Breast epithelium (tissue), 4 donors: ENCODE measurements at regions of chr22 and their contacts with region 1.

Region 1: DNA sequence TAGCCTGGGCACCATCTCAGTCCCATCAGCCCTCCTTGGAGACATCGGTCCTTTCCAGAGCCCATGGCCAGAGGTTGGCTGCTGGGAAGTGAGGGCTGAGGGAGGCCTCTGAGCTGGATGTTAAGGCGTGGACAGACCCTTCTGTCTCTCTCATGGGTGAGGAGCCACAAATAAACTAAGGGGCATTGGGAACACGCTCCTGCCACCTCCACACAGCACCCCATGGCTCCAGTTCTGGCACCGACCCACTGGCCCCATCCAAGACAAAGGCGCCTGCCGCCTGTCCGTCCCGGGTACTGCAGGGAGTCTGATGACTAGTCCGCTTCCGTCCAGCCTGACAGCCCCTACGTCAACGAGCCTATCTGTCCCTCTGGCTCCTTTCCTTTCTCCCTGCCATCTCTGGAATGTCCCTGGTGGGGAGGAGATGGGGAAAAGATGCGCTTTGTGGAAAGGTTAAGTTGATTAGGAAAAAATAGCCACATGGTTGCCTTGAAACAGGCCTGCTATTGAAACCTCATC is 10.5 kb downstream of the PDGFB start:
- DNase-seq: no peak
- H3K4me3 ChIP-seq: no peak overlapping the region
- H3K27ac ChIP-seq: peak overlapping the region; percentile 50 to 81
- H3K4me1 ChIP-seq: peaks cover 10 to 25% of the 10 kb centered on the region in 2 donors
- H3K27me3 ChIP-seq: no peaks in the 10 kb centered on the region
- CTCF ChIP-seq: no peak
- POLR2A ChIP-seq: no peak

Region 2: DNA sequence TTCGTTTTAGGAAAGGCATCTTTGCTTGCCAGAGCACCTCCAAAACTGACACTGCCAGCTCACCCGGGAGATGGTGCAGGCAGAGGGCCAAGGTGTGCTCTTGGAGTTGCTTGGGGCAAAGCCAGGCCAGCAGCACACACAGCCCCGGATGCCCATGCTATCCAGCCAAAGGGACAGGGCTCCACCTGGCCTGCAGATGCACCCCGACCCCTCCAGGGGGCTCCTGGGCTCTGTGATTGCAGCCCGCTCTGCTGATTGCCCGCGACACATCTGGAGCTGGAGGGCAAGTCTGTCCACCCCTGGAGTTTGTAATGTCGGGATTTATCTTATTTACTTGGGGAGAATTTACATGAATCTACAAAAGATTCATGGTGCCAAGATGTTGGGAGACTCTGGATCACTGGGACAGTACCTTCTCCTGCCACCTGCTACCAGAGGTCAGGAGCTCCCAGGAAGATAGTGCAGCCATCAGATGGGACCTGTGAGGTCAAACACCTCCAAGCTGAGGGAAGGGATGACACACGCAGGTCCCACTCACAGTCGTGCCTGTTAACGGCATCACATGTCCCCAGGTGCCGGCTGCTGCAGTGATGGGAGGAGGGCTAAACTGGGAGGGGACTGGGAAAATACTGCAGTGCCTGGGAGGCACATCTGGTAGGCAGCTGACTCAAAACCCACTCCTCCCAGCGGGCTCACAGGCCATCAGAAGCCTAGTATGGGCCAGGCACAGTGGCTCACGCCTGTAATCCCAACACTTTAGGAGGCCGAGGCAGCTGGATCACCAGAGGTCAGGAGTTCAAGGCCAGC is 99.0 kb before region 1 on chr22:
- intact Hi-C with region 1: no loop called
- DNase-seq: peak in 1 of 2 donors; percentile 50
- H3K4me3 ChIP-seq: no peak overlapping the region
- H3K27ac ChIP-seq: no peak overlapping the region
- H3K4me1 ChIP-seq: peaks cover 0 to 7% of the 10 kb centered on the region in 2 donors
- H3K27me3 ChIP-seq: no peaks in the 10 kb centered on the region
- CTCF ChIP-seq: peak in 2 of 3 donors; percentile 35 to 36
- POLR2A ChIP-seq: no peak

Region 3: DNA sequence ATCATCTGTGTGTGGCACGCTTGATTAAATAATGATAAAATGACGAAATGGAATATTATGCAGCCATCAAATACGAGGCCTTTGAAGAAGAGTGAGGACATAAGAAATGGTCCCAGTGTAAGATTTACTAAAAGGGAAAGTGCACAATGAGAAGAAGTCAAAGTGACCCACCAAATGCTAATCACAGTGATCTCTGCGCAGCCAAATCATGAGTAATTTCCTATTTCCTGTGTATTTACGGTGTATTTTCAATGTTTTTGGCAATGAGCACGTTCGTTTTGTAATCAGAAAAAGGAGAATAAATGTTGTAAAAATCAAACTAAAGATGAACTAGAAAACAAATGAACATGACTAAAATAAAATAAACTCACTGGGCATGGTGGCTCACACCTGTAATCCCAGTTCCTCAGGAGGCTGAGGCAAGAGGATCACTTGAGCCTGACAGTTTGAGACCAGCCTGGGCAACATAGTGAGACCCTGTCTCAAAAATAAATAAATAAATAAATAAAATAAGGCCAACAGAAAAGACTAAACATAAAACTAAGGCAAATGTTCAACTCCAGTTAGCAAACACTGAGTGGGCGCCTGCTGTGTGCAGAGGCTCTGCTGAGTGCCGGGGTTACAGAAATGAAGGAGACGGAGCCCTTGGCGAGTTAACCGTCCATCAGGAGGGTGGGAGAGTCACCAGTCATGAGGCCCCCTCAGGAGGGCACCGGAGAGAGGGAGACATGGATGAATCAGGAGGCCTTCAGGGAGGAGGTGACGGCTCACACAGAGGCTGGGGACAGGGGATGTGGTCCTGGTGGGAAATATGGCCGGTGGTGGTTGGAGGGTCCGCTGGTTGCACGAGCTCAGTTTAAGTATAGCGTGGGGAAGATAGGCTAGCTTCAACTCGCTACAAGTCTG is 55.9 kb before region 1 on chr22:
- intact Hi-C with region 1: loop called (anchors 2 kb)
- DNase-seq: peak in 1 of 2 donors; percentile 11
- H3K4me3 ChIP-seq: no peak overlapping the region
- H3K27ac ChIP-seq: peak overlapping the region; percentile 88 to 89
- H3K4me1 ChIP-seq: peaks cover 24 to 29% of the 10 kb centered on the region in 2 donors
- H3K27me3 ChIP-seq: no peaks in the 10 kb centered on the region
- CTCF ChIP-seq: no peak
- POLR2A ChIP-seq: no peak